B cell (primary cell): ENCODE measurements at regions of chr1 and their contacts with region 1.

Region 1: GRCh38 chr1:87328272-87329050 is at the start of gene LMO4:
- DNase-seq: peak; percentile 95
- ATAC-seq: peak; percentile 75
- H3K4me3 ChIP-seq: peak within 1 kb of the TSS; percentile 71 to 93 (median 76)
- H3K4me3 Mint-ChIP-seq: peak within 1 kb of the TSS; percentile 92
- H3K27ac ChIP-seq: peak within 1 kb of the TSS; percentile 80 to 89
- H3K27ac Mint-ChIP-seq: peak within 1 kb of the TSS; percentile 99
- H3K4me1 ChIP-seq: peaks cover 33 to 34% of the 10 kb centered on the region in 2 donors
- H3K4me1 Mint-ChIP-seq: peaks cover 54% of the 10 kb centered on the region
- H3K27me3 ChIP-seq: no peaks in the 10 kb centered on the region
- H3K27me3 Mint-ChIP-seq: no peaks in the 10 kb centered on the region
- CTCF ChIP-seq: no peak
- total RNA-seq, gene LMO4: 35.7 and 40.1 TPM in 2 replicates

Region 2: GRCh38 chr1:87061742-87062156 is 266.7 kb before region 1 on chr1:
- CTCF ChIA-PET with region 1: no interaction called
- POLR2A ChIA-PET with region 1: no interaction called
- intact Hi-C with region 1: loop called (anchors 2 kb)
- DNase-seq: peak; percentile 57
- ATAC-seq: peak; percentile 35
- H3K4me3 ChIP-seq: no peak overlapping the region
- H3K4me3 Mint-ChIP-seq: peak overlapping the region; percentile 68
- H3K27ac ChIP-seq: peak overlapping the region; percentile 59 to 73
- H3K27ac Mint-ChIP-seq: peak overlapping the region; percentile 79
- H3K4me1 ChIP-seq: peaks cover 49 to 81% of the 10 kb centered on the region in 2 donors
- H3K4me1 Mint-ChIP-seq: peaks cover 80% of the 10 kb centered on the region
- H3K27me3 ChIP-seq: no peaks in the 10 kb centered on the region
- H3K27me3 Mint-ChIP-seq: no peaks in the 10 kb centered on the region
- CTCF ChIP-seq: no peak

Region 3: DNA sequence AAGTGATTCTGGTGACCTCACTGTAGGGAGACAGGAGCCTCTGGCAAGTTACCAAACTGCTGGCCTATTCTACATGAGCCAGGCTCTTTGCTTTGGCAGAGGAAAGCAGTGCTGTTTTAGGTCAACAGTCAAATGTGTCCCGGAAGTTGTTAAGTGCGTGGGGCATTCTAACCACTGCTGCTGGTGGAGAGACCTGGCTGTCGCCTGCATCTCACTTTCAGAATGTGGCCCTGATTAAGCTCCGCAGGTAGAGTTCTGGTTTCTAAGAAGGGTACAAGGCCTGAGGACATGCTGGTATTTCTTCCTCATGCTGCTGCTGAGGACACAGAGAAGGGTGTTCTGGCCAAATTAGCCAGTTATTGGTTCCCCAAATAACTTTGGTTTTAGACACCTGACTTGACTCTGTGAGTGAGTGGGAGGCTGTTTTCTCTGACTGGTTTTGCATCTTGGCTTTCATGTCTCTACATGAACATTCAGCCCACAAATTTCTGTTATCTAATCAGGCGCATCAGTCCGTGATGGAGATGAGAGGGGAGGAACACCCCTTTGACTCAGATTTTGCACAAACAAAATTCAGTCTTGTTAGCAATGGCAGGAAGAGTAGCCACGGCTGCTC is 121.0 kb after region 1 on chr1:
- CTCF ChIA-PET with region 1: interaction called, 9 read pairs
- POLR2A ChIA-PET with region 1: interaction called, 3 read pairs
- intact Hi-C with region 1: loop called (anchors 1 kb)
- DNase-seq: peak; percentile 69
- ATAC-seq: peak; percentile 89
- H3K4me3 ChIP-seq: no peak overlapping the region
- H3K4me3 Mint-ChIP-seq: peak overlapping the region; percentile 87
- H3K27ac ChIP-seq: peak overlapping the region; percentile 67 to 70
- H3K27ac Mint-ChIP-seq: peak overlapping the region; percentile 98
- H3K4me1 ChIP-seq: peaks cover 17 to 29% of the 10 kb centered on the region in 2 donors
- H3K4me1 Mint-ChIP-seq: peaks cover 35% of the 10 kb centered on the region
- H3K27me3 ChIP-seq: no peaks in the 10 kb centered on the region
- H3K27me3 Mint-ChIP-seq: no peaks in the 10 kb centered on the region
- CTCF ChIP-seq: no peak

Region 4: DNA sequence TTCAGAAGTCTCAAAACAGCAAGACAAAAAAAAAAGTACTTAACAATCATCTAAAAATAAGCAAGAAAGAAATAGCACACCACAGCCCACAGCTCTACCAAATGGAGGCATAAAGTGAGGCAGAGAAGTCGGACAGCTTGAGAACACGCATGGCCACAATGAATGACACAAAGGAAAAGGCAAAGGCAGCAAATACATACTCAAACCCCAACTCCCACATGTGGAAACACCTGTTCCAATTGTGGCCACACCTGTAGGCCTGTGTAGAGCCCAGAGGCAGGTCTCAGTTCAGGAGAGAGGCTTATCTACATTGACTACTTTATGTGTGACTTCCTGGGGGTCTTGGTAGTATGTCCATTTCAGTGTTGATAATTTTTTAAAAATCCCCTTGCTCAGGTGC is 543.7 kb after region 1 on chr1:
- CTCF ChIA-PET with region 1: no interaction called
- POLR2A ChIA-PET with region 1: no interaction called
- intact Hi-C with region 1: loop called (anchors 5 kb)
- DNase-seq: peak; percentile 38
- ATAC-seq: peak; percentile 51
- H3K4me3 ChIP-seq: peak overlapping the region in 1 of 5 experiments; percentile 34
- H3K4me3 Mint-ChIP-seq: peak overlapping the region; percentile 23
- H3K27ac ChIP-seq: peak overlapping the region; percentile 74 to 90
- H3K27ac Mint-ChIP-seq: peak overlapping the region; percentile 95
- H3K4me1 ChIP-seq: peaks cover 34 to 42% of the 10 kb centered on the region in 2 donors
- H3K4me1 Mint-ChIP-seq: peaks cover 49% of the 10 kb centered on the region
- H3K27me3 ChIP-seq: no peaks in the 10 kb centered on the region
- H3K27me3 Mint-ChIP-seq: no peaks in the 10 kb centered on the region
- CTCF ChIP-seq: no peak

Region 5: DNA sequence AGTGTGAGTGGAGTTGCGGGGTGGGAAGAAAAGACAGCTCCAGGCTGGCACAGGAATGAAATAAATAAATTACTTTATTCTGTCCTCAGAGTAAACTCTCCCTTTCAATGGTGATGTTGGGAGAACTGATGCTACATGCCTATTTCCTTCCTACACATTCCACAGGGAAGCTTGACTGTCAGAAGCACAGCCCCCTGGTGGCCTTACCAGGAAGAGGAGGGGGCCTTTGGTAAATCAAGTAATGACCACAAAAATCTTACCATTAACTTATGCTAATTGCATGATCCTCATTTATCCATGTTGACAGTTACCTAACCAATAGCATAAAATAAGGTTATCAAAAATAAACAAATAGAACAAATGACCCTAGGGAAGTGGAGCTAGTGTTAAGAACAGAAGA is 750.6 kb after region 1 on chr1:
- CTCF ChIA-PET with region 1: no interaction called
- POLR2A ChIA-PET with region 1: no interaction called
- intact Hi-C with region 1: no loop called
- DNase-seq: no peak
- ATAC-seq: no peak
- H3K4me3 ChIP-seq: no peak overlapping the region
- H3K4me3 Mint-ChIP-seq: no peak overlapping the region
- H3K27ac ChIP-seq: no peak overlapping the region
- H3K27ac Mint-ChIP-seq: no peak overlapping the region
- H3K4me1 ChIP-seq: no peaks in the 10 kb centered on the region
- H3K4me1 Mint-ChIP-seq: no peaks in the 10 kb centered on the region
- H3K27me3 ChIP-seq: no peaks in the 10 kb centered on the region
- H3K27me3 Mint-ChIP-seq: peaks cover 10% of the 10 kb centered on the region
- CTCF ChIP-seq: peak; percentile 25

Region 6: DNA sequence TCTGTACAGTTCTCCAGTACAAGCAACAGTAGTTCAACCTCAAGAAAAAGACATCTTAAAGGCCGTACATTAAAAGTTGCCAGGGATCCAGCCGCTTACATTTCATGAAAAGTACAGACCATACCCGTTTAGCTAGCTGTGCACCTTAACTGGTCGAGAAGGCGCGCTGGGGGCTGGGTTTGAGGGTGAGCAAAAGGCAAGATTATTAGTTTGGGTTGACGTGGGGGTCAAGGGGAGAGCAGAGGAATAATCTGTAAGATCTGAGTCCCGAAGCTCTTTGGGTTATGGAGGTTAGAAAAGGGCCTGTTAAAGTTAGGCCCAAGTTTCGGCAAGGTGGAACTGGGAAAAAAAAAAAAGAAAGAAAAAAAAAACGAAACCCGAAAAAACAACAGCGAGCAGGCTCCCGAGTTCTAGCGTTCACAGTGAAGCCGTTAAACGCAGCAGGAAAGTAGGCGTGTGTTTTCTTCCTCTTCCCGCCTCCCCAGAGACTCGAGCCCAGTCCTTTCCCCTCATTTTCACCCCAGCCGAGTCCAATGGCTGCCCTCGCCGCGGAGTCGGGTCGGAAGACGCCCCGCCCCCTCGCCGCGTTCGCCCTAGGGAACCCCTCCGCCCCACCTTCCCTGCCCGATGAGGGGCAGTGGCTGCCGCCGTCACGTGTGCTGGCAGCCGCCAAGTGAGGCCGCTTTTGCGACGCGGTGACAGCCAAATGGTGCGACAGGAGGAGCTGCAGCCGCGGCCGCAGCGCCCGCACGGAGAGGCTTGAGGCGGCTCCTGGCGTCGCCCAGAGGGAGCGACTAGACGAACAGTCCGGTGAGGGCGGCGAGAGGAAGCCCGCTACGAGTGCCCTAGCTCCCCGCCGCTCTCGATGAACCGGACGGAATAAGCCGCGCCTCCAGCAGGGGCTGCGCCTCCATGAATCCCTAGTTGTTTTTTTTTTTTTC is 1355.3 kb after region 1 on chr1 and contains the start of gene PKN2:
- CTCF ChIA-PET with region 1: interaction called, 3 read pairs
- POLR2A ChIA-PET with region 1: interaction called, 3 read pairs
- intact Hi-C with region 1: loop called (anchors 2 kb)
- DNase-seq: peak; percentile 98
- ATAC-seq: peak; percentile 90
- H3K4me3 ChIP-seq: peak within 1 kb of the TSS; percentile 81 to 97 (median 94)
- H3K4me3 Mint-ChIP-seq: peak within 1 kb of the TSS; percentile 95
- H3K27ac ChIP-seq: peak within 1 kb of the TSS; percentile 85 to 89
- H3K27ac Mint-ChIP-seq: peak within 1 kb of the TSS; percentile 98
- H3K4me1 ChIP-seq: peaks cover 11 to 19% of the 10 kb centered on the region in 2 donors
- H3K4me1 Mint-ChIP-seq: peaks cover 28% of the 10 kb centered on the region
- H3K27me3 ChIP-seq: no peaks in the 10 kb centered on the region
- H3K27me3 Mint-ChIP-seq: no peaks in the 10 kb centered on the region
- CTCF ChIP-seq: no peak
- total RNA-seq, gene PKN2: 51.6 and 57.9 TPM in 2 replicates